Left colon (tissue), 2 donors: ENCODE measurements at regions of chr6 and their contacts with region 1.

Region 1: GRCh38 chr6:36765594-36766398 is 68.2 kb downstream of the RAB44 start:
- DNase-seq: peak; percentile 74 to 89
- ATAC-seq: peak; percentile 93

Region 2: DNA sequence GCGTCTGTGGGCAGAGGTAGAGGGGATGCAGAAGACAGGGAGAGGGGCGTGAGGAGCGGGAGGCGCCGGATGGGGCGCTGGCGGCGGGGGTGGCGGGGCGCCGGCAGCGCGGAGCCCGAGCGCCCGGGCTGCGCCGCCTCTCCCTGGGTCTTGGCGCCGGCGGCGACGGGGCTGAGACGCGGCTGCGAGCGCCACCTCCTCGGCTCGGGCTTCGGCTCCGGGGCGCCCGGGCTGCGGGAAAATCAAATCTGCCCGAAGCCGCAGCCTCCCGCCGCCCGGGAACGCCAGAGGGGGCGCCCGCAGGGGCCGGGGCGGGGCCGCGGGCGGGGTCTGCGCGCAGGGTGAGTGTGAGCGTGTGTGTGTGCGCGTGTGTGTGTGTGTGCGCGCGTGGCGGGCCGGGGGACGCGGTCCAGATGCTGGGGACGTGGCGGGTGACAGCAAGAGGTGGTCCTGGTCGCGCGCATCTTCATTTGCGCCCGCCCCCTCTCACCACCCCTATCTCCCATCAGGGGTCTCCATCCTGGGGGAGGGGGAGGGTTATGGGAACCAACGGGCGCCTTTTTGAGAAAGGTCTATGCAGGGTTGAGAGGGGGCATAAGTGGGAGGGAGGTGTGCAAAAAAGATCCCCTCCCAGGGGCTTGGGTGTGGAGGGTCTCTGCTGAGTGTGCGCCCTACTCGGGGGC is 74.1 kb after region 1 on chr6:
- intact Hi-C with region 1: loop called in 1 of 2 experiments (anchors 10 kb)
- DNase-seq: peak in 1 of 2 donors; percentile 50
- ATAC-seq: peak; percentile 76

Region 3: GRCh38 chr6:36851149-36851614 is 85.4 kb after region 1 on chr6:
- intact Hi-C with region 1: loop called (anchors 5 to 10 kb)
- DNase-seq: no peak
- ATAC-seq: peak; percentile 15

Region 4: DNA sequence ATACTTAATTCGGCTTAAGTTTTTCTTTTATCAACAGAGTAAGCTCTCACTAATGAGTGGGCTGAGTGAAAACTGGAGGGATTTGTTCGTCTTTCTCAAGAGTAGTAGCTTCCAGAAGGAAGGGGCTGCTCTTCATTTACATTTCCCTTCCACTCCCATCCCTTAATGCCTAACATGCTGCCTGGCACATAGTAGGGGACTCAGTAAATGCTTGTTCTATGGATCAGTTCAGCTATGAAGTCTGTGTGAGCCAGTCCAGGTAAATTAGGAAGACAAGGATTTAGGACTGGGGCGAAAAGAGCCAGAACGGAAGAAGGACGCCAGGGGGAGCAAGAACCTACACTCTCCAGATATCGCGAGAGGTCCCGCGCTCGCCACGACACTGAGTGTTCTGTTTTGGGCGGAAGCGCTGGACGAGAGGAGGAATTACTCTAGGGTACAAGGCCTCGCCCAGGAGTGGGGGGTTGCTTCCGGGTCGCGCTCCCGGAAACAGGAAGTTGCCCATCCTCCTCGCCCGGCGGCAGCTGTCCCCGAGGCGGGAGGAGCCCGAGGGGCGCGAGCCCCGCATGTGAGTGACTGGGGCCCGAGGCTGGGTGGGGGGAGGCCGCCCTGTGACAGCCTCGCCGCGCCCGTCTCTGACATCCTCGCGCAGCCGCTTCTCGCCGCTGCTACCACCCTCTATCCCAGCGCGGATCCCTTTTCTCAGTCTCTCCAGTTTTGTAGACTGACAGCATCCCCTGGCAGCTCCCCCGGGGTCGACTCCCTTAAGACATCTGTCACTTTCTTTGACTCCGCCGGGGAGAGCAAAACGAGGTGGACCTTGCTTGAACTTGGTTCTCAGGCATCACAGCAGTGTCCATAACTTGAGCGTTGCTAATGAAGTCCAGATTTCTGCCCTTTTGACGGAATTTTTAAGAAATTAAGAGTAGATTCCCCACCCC is 119.9 kb after region 1 on chr6 and contains the start of gene C6orf89:
- intact Hi-C with region 1: no loop called
- DNase-seq: peak; percentile 98 to 99
- ATAC-seq: peak; percentile 100
- total RNA-seq, gene C6orf89: 53.9 to 59.3 TPM

Region 5: GRCh38 chr6:37018198-37019064 is 252.6 kb after region 1 on chr6:
- intact Hi-C with region 1: loop called in 1 of 2 experiments (anchors 5 kb)
- DNase-seq: peak; percentile 88 to 92
- ATAC-seq: peak; percentile 90

Region 6: GRCh38 chr6:37207903-37208456 is 442.2 kb after region 1 on chr6:
- intact Hi-C with region 1: loop called in 1 of 2 experiments (anchors 10 kb)
- DNase-seq: peak; percentile 87 to 89
- ATAC-seq: peak; percentile 70

Region 7: GRCh38 chr6:37277001-37277409 is 511.2 kb after region 1 on chr6:
- intact Hi-C with region 1: no loop called
- DNase-seq: no peak
- ATAC-seq: no peak